Ascending aorta (tissue), 2 donors: ENCODE measurements at regions of chr7 and their contacts with region 1.

Region 1: GRCh38 chr7:131424219-131424822 is 96.6 kb downstream of the MKLN1 start:
- DNase-seq: no peak
- H3K4me3 ChIP-seq: no peak overlapping the region
- H3K27ac ChIP-seq: no peak overlapping the region
- H3K4me1 ChIP-seq: peaks cover 0 to 3% of the 10 kb centered on the region in 2 donors
- H3K27me3 ChIP-seq: no peaks in the 10 kb centered on the region
- CTCF ChIP-seq: peak; percentile 40 to 59 (median 43)

Region 2: GRCh38 chr7:131071786-131072504 is 352.4 kb before region 1 on chr7:
- intact Hi-C with region 1: loop called (anchors 10 kb)
- DNase-seq: peak in 1 of 2 donors; percentile 82
- H3K4me3 ChIP-seq: peak overlapping the region; percentile 18 to 24
- H3K27ac ChIP-seq: peak overlapping the region; percentile 16 to 71
- H3K4me1 ChIP-seq: peaks cover 4 to 54% of the 10 kb centered on the region in 2 donors
- H3K27me3 ChIP-seq: no peaks in the 10 kb centered on the region
- CTCF ChIP-seq: peak in 2 of 3 experiments; percentile 27 to 40

Region 3: GRCh38 chr7:131480384-131481315 is 56.3 kb after region 1 on chr7:
- intact Hi-C with region 1: no loop called
- DNase-seq: no peak
- H3K4me3 ChIP-seq: no peak overlapping the region
- H3K27ac ChIP-seq: no peak overlapping the region
- H3K4me1 ChIP-seq: peaks cover 3 to 6% of the 10 kb centered on the region in 2 donors
- H3K27me3 ChIP-seq: no peaks in the 10 kb centered on the region
- CTCF ChIP-seq: no peak